Mammary epithelial cell (primary cell): ENCODE measurements at regions of chr1 and their contacts with region 1.

Region 1: DNA sequence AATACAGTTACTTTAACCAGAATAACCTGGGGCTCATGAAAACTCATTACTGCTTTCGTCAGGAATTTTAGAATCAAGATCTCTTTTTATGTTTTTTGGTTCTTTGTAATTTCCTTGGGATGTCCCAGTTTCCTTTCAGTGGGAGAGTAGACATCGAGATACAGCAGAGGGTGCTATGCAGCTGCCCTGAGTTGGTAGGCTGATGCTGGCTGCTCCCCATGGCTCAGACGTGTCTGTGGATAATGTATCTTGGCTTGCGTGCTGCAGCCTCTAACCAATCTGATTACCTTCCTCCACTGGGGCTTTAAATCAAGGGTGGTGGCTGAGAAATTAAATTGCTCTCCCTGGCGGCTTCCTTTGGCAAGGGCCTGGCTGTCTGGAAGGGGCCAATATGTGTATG is 253.7 kb downstream of the CACNA1E start:
- DNase-seq: peak; percentile 19
- H3K4me3 ChIP-seq: no peak overlapping the region
- H3K27ac ChIP-seq: no peak overlapping the region
- H3K4me1 ChIP-seq: no peaks in the 10 kb centered on the region
- H3K27me3 ChIP-seq: no peaks in the 10 kb centered on the region
- CTCF ChIP-seq: peak in 1 of 2 donors; percentile 64

Region 2: GRCh38 chr1:180680558-180681144 is 1056.4 kb before region 1 on chr1:
- CTCF ChIA-PET with region 1: no interaction called
- dilution Hi-C with region 1: no loop called
- in situ Hi-C with region 1: no loop called
- intact Hi-C with region 1: no loop called
- DNase-seq: peak; percentile 74
- H3K4me3 ChIP-seq: no peak overlapping the region
- H3K27ac ChIP-seq: no peak overlapping the region
- H3K4me1 ChIP-seq: peaks cover 7% of the 10 kb centered on the region
- H3K27me3 ChIP-seq: no peaks in the 10 kb centered on the region
- CTCF ChIP-seq: no peak

Region 3: DNA sequence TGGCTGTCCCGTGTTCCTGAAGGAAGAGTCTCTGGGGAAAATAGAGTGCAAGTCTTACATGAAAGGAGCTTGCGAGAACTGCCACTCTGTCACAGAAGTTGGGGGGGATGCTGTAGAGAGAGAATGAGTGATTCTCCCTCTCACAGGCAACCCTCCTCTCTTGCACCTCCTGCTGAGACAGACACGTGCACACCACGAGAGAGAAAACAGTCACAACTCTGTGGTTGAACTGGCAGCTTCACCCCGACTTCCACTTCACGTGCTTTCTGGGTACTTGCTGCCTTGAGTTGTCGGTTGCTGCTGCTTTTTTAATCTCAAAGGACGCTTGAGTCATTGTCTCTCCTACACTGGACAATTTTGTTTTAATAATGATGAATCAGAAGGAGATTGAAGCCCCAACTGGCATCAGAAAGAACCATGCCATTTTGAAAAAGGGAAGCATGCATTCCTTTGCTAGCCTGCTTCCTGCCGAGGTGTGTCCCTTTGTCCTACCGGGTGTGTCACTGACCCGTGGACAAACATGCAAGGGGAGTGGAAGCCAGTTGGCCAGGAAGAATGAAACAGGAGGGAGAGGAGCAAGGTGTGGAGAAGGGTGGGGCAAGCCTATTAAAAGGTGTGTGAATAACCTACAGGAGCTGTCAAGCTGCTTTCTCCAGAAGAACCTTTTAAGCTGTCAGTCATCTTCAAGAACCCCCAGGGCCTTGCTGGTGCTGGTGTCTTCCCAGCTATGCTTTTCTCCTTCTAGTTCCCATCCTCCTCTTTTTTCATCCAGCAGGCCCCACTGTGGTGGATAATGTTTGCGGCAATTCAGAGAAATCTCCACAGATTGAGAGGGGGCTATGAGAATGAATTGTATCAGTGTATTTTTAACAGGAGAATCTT is 89.5 kb before region 1 on chr1:
- CTCF ChIA-PET with region 1: no interaction called
- dilution Hi-C with region 1: no loop called
- in situ Hi-C with region 1: no loop called
- intact Hi-C with region 1: no loop called
- DNase-seq: peak; percentile 12
- H3K4me3 ChIP-seq: no peak overlapping the region
- H3K27ac ChIP-seq: no peak overlapping the region
- H3K4me1 ChIP-seq: peaks cover 8% of the 10 kb centered on the region
- H3K27me3 ChIP-seq: peaks cover under 1% of the 10 kb centered on the region
- CTCF ChIP-seq: no peak

Region 4: GRCh38 chr1:181929363-181929762 is 192.3 kb after region 1 on chr1:
- CTCF ChIA-PET with region 1: no interaction called
- dilution Hi-C with region 1: no loop called
- in situ Hi-C with region 1: loop called (anchors 10 kb)
- intact Hi-C with region 1: no loop called
- DNase-seq: no peak
- H3K4me3 ChIP-seq: no peak overlapping the region
- H3K27ac ChIP-seq: no peak overlapping the region
- H3K4me1 ChIP-seq: no peaks in the 10 kb centered on the region
- H3K27me3 ChIP-seq: peaks cover 3% of the 10 kb centered on the region
- CTCF ChIP-seq: peak in 1 of 2 donors; percentile 26

Region 5: GRCh38 chr1:182054698-182055326 is 317.8 kb after region 1 on chr1:
- CTCF ChIA-PET with region 1: no interaction called
- dilution Hi-C with region 1: no loop called
- in situ Hi-C with region 1: no loop called
- intact Hi-C with region 1: loop called (anchors 5 kb)
- DNase-seq: peak; percentile 38
- H3K4me3 ChIP-seq: no peak overlapping the region
- H3K27ac ChIP-seq: no peak overlapping the region
- H3K4me1 ChIP-seq: no peaks in the 10 kb centered on the region
- H3K27me3 ChIP-seq: no peaks in the 10 kb centered on the region
- CTCF ChIP-seq: peak; percentile 60